Aorta (tissue), 5 donors: ENCODE measurements at regions of chr10 and their contacts with region 1.

Region 1: DNA sequence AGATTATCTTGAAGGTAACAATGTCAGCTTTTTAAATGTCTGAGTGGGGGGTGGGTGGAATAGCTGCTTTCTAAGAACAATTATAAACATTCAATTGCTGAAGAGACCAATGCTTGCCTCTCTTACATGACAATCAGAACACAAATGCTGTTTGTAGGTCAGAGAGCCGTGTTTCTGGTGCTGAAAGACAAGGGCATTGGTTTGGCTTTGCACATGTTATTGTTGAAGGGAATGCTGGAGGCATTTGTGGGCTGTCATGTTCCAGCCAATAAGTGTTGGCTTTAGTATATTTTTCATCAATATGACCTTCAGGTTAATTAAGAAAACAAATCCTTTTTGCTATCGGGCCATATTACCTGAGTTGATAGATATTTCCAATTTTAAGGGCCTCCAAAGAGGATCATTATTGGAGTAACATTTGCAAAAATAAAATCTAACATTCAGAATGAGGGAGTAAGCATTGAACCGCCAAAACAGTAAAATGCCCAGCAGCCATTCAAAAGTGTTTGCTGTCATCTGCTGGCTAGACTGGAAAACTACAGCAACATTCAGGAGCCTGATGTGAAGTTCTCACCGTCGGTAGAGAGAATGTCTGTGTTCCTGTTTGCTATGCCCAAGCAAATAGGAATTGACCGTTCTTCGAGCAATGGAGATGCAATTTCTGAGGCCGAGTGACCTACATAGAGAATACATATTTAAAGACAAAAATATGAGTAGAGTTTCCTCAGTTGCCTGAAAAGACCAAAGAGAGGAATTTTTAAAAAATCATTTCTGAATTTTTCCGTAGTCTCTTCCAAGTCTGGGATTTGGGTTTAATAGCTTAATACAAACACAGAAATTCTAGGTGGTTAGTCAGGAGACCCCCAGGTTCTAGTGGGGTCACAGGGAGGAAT is 118.9 kb downstream of the APBB1IP start:
- DNase-seq: no peak
- ATAC-seq: peak; percentile 84
- H3K4me3 ChIP-seq: no peak overlapping the region
- H3K27ac ChIP-seq: no peak overlapping the region
- H3K4me1 ChIP-seq: no peaks in the 10 kb centered on the region
- H3K27me3 ChIP-seq: no peaks in the 10 kb centered on the region

Region 2: GRCh38 chr10:25869609-25870008 is 687.4 kb before region 1 on chr10:
- intact Hi-C with region 1: loop called (anchors 5 to 10 kb)
- DNase-seq: no peak
- ATAC-seq: no peak
- H3K4me3 ChIP-seq: no peak overlapping the region
- H3K27ac ChIP-seq: no peak overlapping the region
- H3K4me1 ChIP-seq: no peaks in the 10 kb centered on the region
- H3K27me3 ChIP-seq: no peaks in the 10 kb centered on the region

Region 3: GRCh38 chr10:25875556-25876165 is 681.3 kb before region 1 on chr10:
- intact Hi-C with region 1: loop called (anchors 5 to 10 kb)
- DNase-seq: peak; percentile 72 to 85
- ATAC-seq: peak; percentile 84
- H3K4me3 ChIP-seq: no peak overlapping the region
- H3K27ac ChIP-seq: no peak overlapping the region
- H3K4me1 ChIP-seq: no peaks in the 10 kb centered on the region
- H3K27me3 ChIP-seq: no peaks in the 10 kb centered on the region

Region 4: GRCh38 chr10:26334932-26335573 is 221.9 kb before region 1 on chr10:
- intact Hi-C with region 1: loop called (anchors 2 kb)
- DNase-seq: no peak
- ATAC-seq: peak; percentile 81
- H3K4me3 ChIP-seq: no peak overlapping the region
- H3K27ac ChIP-seq: no peak overlapping the region
- H3K4me1 ChIP-seq: no peaks in the 10 kb centered on the region
- H3K27me3 ChIP-seq: no peaks in the 10 kb centered on the region

Region 5: GRCh38 chr10:26540601-26541000 is 16.4 kb before region 1 on chr10:
- intact Hi-C with region 1: no loop called
- DNase-seq: no peak
- ATAC-seq: no peak
- H3K4me3 ChIP-seq: no peak overlapping the region
- H3K27ac ChIP-seq: no peak overlapping the region
- H3K4me1 ChIP-seq: no peaks in the 10 kb centered on the region
- H3K27me3 ChIP-seq: no peaks in the 10 kb centered on the region